GM12878 (cell line): ENCODE measurements at regions of chr7 and their contacts with region 1.

Region 1: GRCh38 chr7:131124001-131124629 is 203.6 kb upstream of the MKLN1 start:
- DNase-seq: peak; percentile 92
- ATAC-seq: peak; percentile 92
- H3K4me3 ChIP-seq: 0 out of 2 replicates have a peak overlapping the region, but pooled peaks have one; percentile 17
- H3K27ac ChIP-seq: peak overlapping the region; percentile 77
- H3K4me1 ChIP-seq: peaks cover 24% of the 10 kb centered on the region
- H3K27me3 ChIP-seq: no peaks in the 10 kb centered on the region
- CTCF ChIP-seq: no peak
- EP300 ChIP-seq: peak; percentile 89 to 97; a peak in 3 of 4 replicates
- POLR2A ChIP-seq: peak; percentile 60; the same call in 1 of the 2 replicates
- RAD21 ChIP-seq: no peak; the same call in 1 of the 2 replicates

Region 2: GRCh38 chr7:131188367-131189339 is 64.5 kb after region 1 on chr7:
- CTCF ChIA-PET with region 1: interaction called, 3 read pairs
- POLR2A ChIA-PET with region 1: interaction called, 4 read pairs
- RAD21 ChIA-PET with region 1: interaction called, 16 read pairs
- SMC1A ChIA-PET with region 1: interaction called, 18 read pairs
- in situ Hi-C with region 1: no loop called
- intact Hi-C with region 1: no loop called
- DNase-seq: peak; percentile 61
- ATAC-seq: peak; percentile 97
- H3K4me3 ChIP-seq: no peak overlapping the region
- H3K27ac ChIP-seq: no peak overlapping the region
- H3K4me1 ChIP-seq: peaks cover 13% of the 10 kb centered on the region
- H3K27me3 ChIP-seq: no peaks in the 10 kb centered on the region
- CTCF ChIP-seq: no peak
- EP300 ChIP-seq: peak in 1 of 2 experiments; percentile 58; a peak in 1 of 4 replicates
- POLR2A ChIP-seq: no peak
- RAD21 ChIP-seq: no peak

Region 3: GRCh38 chr7:131203291-131203976 is 79.3 kb after region 1 on chr7:
- CTCF ChIA-PET with region 1: no interaction called
- POLR2A ChIA-PET with region 1: no interaction called
- RAD21 ChIA-PET with region 1: no interaction called
- SMC1A ChIA-PET with region 1: no interaction called
- in situ Hi-C with region 1: no loop called
- intact Hi-C with region 1: no loop called
- DNase-seq: no peak
- ATAC-seq: no peak
- H3K4me3 ChIP-seq: no peak overlapping the region
- H3K27ac ChIP-seq: no peak overlapping the region
- H3K4me1 ChIP-seq: no peaks in the 10 kb centered on the region
- H3K27me3 ChIP-seq: no peaks in the 10 kb centered on the region
- CTCF ChIP-seq: no peak
- EP300 ChIP-seq: no peak
- POLR2A ChIP-seq: no peak
- RAD21 ChIP-seq: no peak

Region 4: GRCh38 chr7:131219312-131220041 is 95.4 kb after region 1 on chr7:
- CTCF ChIA-PET with region 1: no interaction called
- POLR2A ChIA-PET with region 1: no interaction called
- RAD21 ChIA-PET with region 1: interaction called, 6 read pairs
- SMC1A ChIA-PET with region 1: interaction called, 4 read pairs
- in situ Hi-C with region 1: no loop called
- intact Hi-C with region 1: loop called (anchors 2 kb)
- DNase-seq: no peak
- ATAC-seq: peak; percentile 64
- H3K4me3 ChIP-seq: no peak overlapping the region
- H3K27ac ChIP-seq: peak overlapping the region; percentile 24
- H3K4me1 ChIP-seq: peaks cover 18% of the 10 kb centered on the region
- H3K27me3 ChIP-seq: no peaks in the 10 kb centered on the region
- CTCF ChIP-seq: no peak
- EP300 ChIP-seq: peak in 1 of 2 experiments; percentile 25; a peak in 1 of 4 replicates
- POLR2A ChIP-seq: no peak
- RAD21 ChIP-seq: no peak

Region 5: GRCh38 chr7:131231381-131232220 is 107.5 kb after region 1 on chr7:
- CTCF ChIA-PET with region 1: interaction called, 5 read pairs
- POLR2A ChIA-PET with region 1: interaction called, 4 read pairs
- RAD21 ChIA-PET with region 1: interaction called, 13 read pairs
- SMC1A ChIA-PET with region 1: interaction called, 16 read pairs
- in situ Hi-C with region 1: no loop called
- intact Hi-C with region 1: no loop called
- DNase-seq: peak; percentile 82
- ATAC-seq: peak; percentile 90
- H3K4me3 ChIP-seq: 0 out of 2 replicates have a peak overlapping the region, but pooled peaks have one; percentile 44
- H3K27ac ChIP-seq: peak overlapping the region; percentile 47
- H3K4me1 ChIP-seq: peaks cover 3% of the 10 kb centered on the region; the same call in 1 of the 2 replicates
- H3K27me3 ChIP-seq: no peaks in the 10 kb centered on the region
- CTCF ChIP-seq: no peak
- EP300 ChIP-seq: peak; percentile 60 to 80; a peak in 2 of 4 replicates
- POLR2A ChIP-seq: peak; percentile 65; the same call in 1 of the 2 replicates
- RAD21 ChIP-seq: peak; percentile 3; the same call in 1 of the 2 replicates

Region 6: GRCh38 chr7:131302876-131303707 is 179.0 kb after region 1 on chr7:
- CTCF ChIA-PET with region 1: interaction called, 12 read pairs
- POLR2A ChIA-PET with region 1: no interaction called
- RAD21 ChIA-PET with region 1: interaction called, 4 read pairs
- SMC1A ChIA-PET with region 1: interaction called, 5 read pairs
- in situ Hi-C with region 1: no loop called
- intact Hi-C with region 1: no loop called
- DNase-seq: no peak
- ATAC-seq: peak; percentile 81
- H3K4me3 ChIP-seq: no peak overlapping the region
- H3K27ac ChIP-seq: no peak overlapping the region
- H3K4me1 ChIP-seq: no peaks in the 10 kb centered on the region
- H3K27me3 ChIP-seq: no peaks in the 10 kb centered on the region; a peak in 1 of 4 replicates
- CTCF ChIP-seq: peak; percentile 59 to 68 (median 64); a peak in 5 of 6 replicates
- EP300 ChIP-seq: no peak
- POLR2A ChIP-seq: no peak
- RAD21 ChIP-seq: peak; percentile 87

Region 7: GRCh38 chr7:131327626-131328376 is 203.7 kb after region 1 on chr7 and contains the start of gene MKLN1:
- CTCF ChIA-PET with region 1: interaction called, 3 read pairs
- POLR2A ChIA-PET with region 1: no interaction called
- RAD21 ChIA-PET with region 1: interaction called, 4 read pairs
- SMC1A ChIA-PET with region 1: interaction called, 5 read pairs
- in situ Hi-C with region 1: no loop called
- intact Hi-C with region 1: loop called (anchors 5 kb)
- DNase-seq: peak; percentile 35
- ATAC-seq: peak; percentile 95
- H3K4me3 ChIP-seq: peak within 1 kb of the TSS; percentile 88
- H3K27ac ChIP-seq: peak within 1 kb of the TSS; percentile 97
- H3K4me1 ChIP-seq: 0 out of 2 replicates have a peak, but pooled peaks cover 3% of the 10 kb centered on the region
- H3K27me3 ChIP-seq: no peaks in the 10 kb centered on the region
- CTCF ChIP-seq: no peak
- EP300 ChIP-seq: peak in 1 of 2 experiments; percentile 22; a peak in 1 of 4 replicates
- POLR2A ChIP-seq: peak; percentile 99
- RAD21 ChIP-seq: no peak
- polyA plus RNA-seq, gene MKLN1: 16.4 to 31.8 TPM